ENCODE measurements at regions of chr2 and their contacts with region 1.

Region 1: GRCh38 chr2:201432038-201432620 is 19.1 kb downstream of the TRAK2 start:
- DNase-seq: peak in 7 of 9 donors; percentile 21 to 60 (median 39)
- ATAC-seq: peak; percentile 84
- H3K4me3 ChIP-seq: no peak overlapping the region
- H3K4me3 Mint-ChIP-seq: peak overlapping the region in 9 of 10 donors; percentile 14 to 76 (median 54)
- H3K27ac ChIP-seq: peak overlapping the region; percentile 38
- H3K27ac Mint-ChIP-seq: peak overlapping the region; percentile 65 to 94 (median 91)
- H3K4me1 ChIP-seq: peaks cover 20 to 23% of the 10 kb centered on the region in 2 donors
- H3K4me1 Mint-ChIP-seq: peaks cover 24 to 75% (median 66%) of the 10 kb centered on the region in 7 donors
- H3K27me3 ChIP-seq: no peaks in the 10 kb centered on the region
- H3K27me3 Mint-ChIP-seq: no peaks in the 10 kb centered on the region

Region 2: GRCh38 chr2:201084863-201085262 is 347.3 kb before region 1 on chr2:
- CTCF ChIA-PET with region 1: no interaction called
- POLR2A ChIA-PET with region 1: no interaction called
- intact Hi-C with region 1: no loop called
- DNase-seq: no peak
- ATAC-seq: peak; percentile 54
- H3K4me3 ChIP-seq: no peak overlapping the region
- H3K4me3 Mint-ChIP-seq: no peak overlapping the region
- H3K27ac ChIP-seq: no peak overlapping the region
- H3K27ac Mint-ChIP-seq: peak overlapping the region in 6 of 9 donors; percentile 18 to 63 (median 42)
- H3K4me1 ChIP-seq: no peaks in the 10 kb centered on the region
- H3K4me1 Mint-ChIP-seq: peaks cover 0 to 15% (median 6%) of the 10 kb centered on the region in 7 donors
- H3K27me3 ChIP-seq: no peaks in the 10 kb centered on the region
- H3K27me3 Mint-ChIP-seq: no peaks in the 10 kb centered on the region

Region 3: GRCh38 chr2:201254081-201254730 is 177.9 kb before region 1 on chr2:
- CTCF ChIA-PET with region 1: no interaction called
- POLR2A ChIA-PET with region 1: no interaction called
- intact Hi-C with region 1: no loop called
- DNase-seq: peak in 1 of 9 donors; percentile 47
- ATAC-seq: no peak
- H3K4me3 ChIP-seq: no peak overlapping the region
- H3K4me3 Mint-ChIP-seq: peak overlapping the region in 9 of 10 donors; percentile 33 to 73 (median 56)
- H3K27ac ChIP-seq: peak overlapping the region; percentile 91
- H3K27ac Mint-ChIP-seq: peak overlapping the region; percentile 88 to 98 (median 95)
- H3K4me1 ChIP-seq: peaks cover 68 to 76% of the 10 kb centered on the region in 2 donors
- H3K4me1 Mint-ChIP-seq: peaks cover 60 to 96% (median 86%) of the 10 kb centered on the region in 7 donors
- H3K27me3 ChIP-seq: no peaks in the 10 kb centered on the region
- H3K27me3 Mint-ChIP-seq: no peaks in the 10 kb centered on the region

Region 4: GRCh38 chr2:201414099-201415023 is 17.8 kb before region 1 on chr2:
- CTCF ChIA-PET with region 1: no interaction called
- POLR2A ChIA-PET with region 1: interaction called, 4 read pairs
- intact Hi-C with region 1: loop called in 1 of 2 experiments (anchors 1 kb)
- DNase-seq: peak in 6 of 9 donors; percentile 7 to 55 (median 25)
- ATAC-seq: peak; percentile 78
- H3K4me3 ChIP-seq: peak overlapping the region; percentile 10
- H3K4me3 Mint-ChIP-seq: no peak overlapping the region
- H3K27ac ChIP-seq: peak overlapping the region; percentile 48
- H3K27ac Mint-ChIP-seq: no peak overlapping the region
- H3K4me1 ChIP-seq: peaks cover 28 to 29% of the 10 kb centered on the region in 2 donors
- H3K4me1 Mint-ChIP-seq: peaks cover 4 to 29% (median 24%) of the 10 kb centered on the region in 7 donors
- H3K27me3 ChIP-seq: no peaks in the 10 kb centered on the region
- H3K27me3 Mint-ChIP-seq: no peaks in the 10 kb centered on the region

Region 5: GRCh38 chr2:201420442-201421113 is 11.6 kb before region 1 on chr2:
- CTCF ChIA-PET with region 1: no interaction called
- POLR2A ChIA-PET with region 1: no interaction called
- intact Hi-C with region 1: loop called in 1 of 2 experiments (anchors 1 kb)
- DNase-seq: no peak
- ATAC-seq: no peak
- H3K4me3 ChIP-seq: no peak overlapping the region
- H3K4me3 Mint-ChIP-seq: no peak overlapping the region
- H3K27ac ChIP-seq: no peak overlapping the region
- H3K27ac Mint-ChIP-seq: peak overlapping the region in 7 of 9 donors; percentile 55 to 91 (median 71)
- H3K4me1 ChIP-seq: peaks cover 7 to 15% of the 10 kb centered on the region in 2 donors
- H3K4me1 Mint-ChIP-seq: peaks cover 16 to 75% (median 62%) of the 10 kb centered on the region in 7 donors
- H3K27me3 ChIP-seq: no peaks in the 10 kb centered on the region
- H3K27me3 Mint-ChIP-seq: no peaks in the 10 kb centered on the region

Measured in naive thymus-derived CD4-positive, alpha-beta T cell (primary cell).